Colonic mucosa (tissue), 4 donors: ENCODE measurements at regions of chr1 and their contacts with region 1.

Region 1: DNA sequence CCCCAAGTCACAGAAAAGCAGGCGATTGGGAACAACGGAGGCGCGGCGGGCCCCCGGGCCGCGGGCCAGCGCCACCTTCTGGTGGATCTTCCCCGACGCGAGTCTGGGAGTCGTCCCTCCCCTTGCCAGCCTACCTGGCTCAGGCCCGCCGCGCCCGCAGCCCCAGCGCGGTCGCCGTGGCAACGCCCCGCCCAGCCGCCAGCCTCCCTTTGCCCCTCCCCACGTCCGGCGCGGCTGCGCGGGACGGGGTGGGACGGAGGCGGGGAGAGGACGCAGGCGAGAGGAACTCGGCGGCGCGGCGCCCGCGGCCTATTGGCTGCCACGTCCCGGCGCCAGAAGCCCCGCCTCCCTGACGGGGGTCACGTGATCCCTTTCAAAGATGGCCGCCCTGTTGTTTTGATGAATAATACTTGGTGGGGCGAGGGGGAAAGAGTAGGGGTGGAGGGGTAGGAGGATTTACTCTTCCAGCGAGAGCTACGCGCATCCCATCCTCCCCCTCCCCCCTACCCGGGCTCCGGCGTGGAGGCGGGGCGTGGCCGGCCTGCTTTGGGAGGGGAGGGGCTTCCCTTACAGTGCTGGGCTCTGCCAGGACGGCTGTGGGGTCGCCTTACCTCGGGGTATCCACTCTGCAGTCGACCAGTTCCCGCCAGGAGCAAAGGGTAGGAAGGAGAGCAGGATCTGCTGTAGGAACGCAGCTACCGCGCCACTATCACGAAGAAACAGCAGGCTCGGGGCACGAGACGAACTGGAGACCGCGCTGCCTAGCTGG is at the start of gene UBE4B:
- DNase-seq: peak; percentile 97
- H3K4me3 ChIP-seq: peak within 1 kb of the TSS; percentile 78
- H3K27ac ChIP-seq: peak within 1 kb of the TSS; percentile 91
- H3K4me1 ChIP-seq: peaks cover 9% of the 10 kb centered on the region
- H3K27me3 ChIP-seq: no peaks in the 10 kb centered on the region
- CTCF ChIP-seq: peak; percentile 87
- total RNA-seq, gene UBE4B: 34.6 to 40.9 TPM

Region 2: DNA sequence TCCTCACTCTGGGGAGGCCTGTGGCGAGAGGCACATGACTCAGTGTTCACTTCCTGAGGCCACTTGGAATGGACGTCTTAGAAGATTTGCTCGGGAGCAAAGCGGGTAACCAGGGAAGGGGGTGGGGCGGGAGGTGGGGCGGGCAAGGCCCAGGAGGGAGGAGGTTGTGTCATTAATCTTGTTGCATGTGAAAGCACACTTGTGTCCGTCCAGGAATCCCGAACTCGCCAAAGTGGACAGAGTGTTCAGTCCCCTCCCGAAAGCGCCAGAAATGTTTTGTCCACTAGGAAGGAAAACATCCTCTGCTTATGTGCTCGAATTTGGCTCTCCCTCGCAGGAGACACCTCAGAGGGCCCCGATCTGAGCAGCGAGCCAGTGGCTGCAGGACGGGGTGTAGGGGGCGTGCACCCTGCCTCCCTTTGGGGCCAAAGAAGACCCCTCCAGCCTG is 655.9 kb before region 1 on chr1:
- intact Hi-C with region 1: no loop called
- DNase-seq: peak; percentile 35
- H3K4me3 ChIP-seq: no peak overlapping the region
- H3K27ac ChIP-seq: peak overlapping the region; percentile 61
- H3K4me1 ChIP-seq: peaks cover 6% of the 10 kb centered on the region
- H3K27me3 ChIP-seq: no peaks in the 10 kb centered on the region
- CTCF ChIP-seq: no peak

Region 3: DNA sequence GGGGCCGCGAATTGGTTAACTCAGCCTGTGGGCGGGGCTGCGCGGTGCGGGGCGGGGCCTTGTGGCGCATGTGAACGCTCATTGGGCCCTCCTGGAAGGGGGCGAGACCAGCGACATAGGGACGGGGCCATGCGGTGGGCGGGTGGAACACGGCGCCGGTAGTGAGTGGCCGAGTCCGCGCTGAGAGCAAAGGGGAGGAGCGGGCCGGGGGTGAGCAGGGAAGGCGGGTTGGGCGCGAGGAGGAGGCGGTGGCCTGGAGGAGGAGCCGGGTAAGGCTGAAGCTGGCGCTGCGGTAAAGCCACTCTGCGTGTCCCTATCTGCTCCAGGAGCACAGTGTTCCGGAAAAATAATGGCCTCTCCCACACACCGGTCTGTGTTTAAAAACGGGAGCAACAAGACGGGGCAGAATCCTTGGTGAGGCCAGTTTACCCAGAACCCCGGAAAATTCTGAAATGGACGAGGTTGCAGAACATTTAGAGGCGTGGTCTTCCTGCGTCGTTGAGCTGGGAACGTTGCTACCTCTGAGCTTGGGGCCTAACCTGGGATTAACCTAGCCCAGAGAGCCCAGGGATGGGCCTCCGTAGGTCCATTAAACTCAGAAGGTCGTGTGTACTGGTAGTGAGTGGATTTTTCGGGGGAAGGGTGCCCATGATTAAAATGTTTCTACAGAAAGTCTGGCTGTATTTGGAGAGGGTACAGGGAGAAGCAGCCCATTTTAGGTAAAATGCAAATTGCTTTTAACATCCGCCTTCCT is 122.2 kb before region 1 on chr1:
- intact Hi-C with region 1: no loop called
- DNase-seq: peak; percentile 100
- H3K4me3 ChIP-seq: peak overlapping the region; percentile 51
- H3K27ac ChIP-seq: peak overlapping the region; percentile 89
- H3K4me1 ChIP-seq: peaks cover 4% of the 10 kb centered on the region
- H3K27me3 ChIP-seq: no peaks in the 10 kb centered on the region
- CTCF ChIP-seq: no peak

Region 4: DNA sequence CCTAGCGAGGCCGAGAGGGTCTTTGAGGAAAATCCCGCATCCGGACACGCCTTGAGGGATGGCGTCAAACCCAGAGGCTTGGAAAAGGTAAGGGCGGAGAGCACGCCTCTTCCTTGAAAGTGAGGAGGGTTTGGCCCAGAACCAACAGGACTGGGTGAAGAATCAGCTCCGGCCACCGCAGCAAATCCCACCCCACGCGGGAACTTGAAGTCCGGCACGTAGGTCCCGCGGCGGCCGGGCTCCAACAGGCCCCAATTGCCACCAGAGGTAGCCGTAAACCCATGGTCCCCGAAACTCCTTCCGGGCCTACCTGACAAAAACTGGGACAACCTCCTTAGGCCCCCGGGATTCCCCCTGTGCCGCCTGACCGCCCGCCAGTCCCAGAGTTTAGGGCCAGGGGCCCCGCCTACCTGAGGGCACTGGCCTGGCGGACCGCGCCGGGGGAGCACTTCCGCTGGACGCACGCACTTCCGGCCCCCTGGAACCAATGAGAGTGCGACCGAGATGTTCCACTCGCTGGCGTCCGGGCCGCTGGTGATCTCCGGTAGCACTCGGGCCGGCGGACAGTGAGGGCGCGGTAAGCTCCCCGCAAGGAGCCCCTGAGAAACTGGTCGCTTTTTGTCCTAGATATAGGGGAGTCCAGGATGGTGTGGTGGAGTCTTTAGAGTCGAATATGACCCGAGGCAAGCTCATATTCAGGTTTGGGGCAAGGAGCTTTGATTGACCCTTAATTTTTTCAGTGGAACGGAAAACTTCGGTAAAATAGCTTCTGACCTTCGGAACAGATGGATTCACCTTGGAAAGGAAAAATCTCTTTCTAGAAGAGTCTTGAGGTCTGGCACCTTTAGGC is 89.6 kb before region 1 on chr1 and contains the starts of genes LZIC and NMNAT1:
- intact Hi-C with region 1: loop called (anchors 5 kb)
- DNase-seq: peak; percentile 95
- H3K4me3 ChIP-seq: peak within 1 kb of the TSS; percentile 77
- H3K27ac ChIP-seq: peak within 1 kb of the TSS; percentile 90
- H3K4me1 ChIP-seq: no peaks in the 10 kb centered on the region
- H3K27me3 ChIP-seq: no peaks in the 10 kb centered on the region
- CTCF ChIP-seq: no peak
- total RNA-seq, gene LZIC: 40.6 to 47.2 TPM
- total RNA-seq, gene NMNAT1: 18.8 to 25.4 TPM

Region 5: GRCh38 chr1:10108134-10108663 is 75.4 kb after region 1 on chr1:
- intact Hi-C with region 1: loop called (anchors 5 kb)
- DNase-seq: no peak
- H3K4me3 ChIP-seq: no peak overlapping the region
- H3K27ac ChIP-seq: no peak overlapping the region
- H3K4me1 ChIP-seq: no peaks in the 10 kb centered on the region
- H3K27me3 ChIP-seq: no peaks in the 10 kb centered on the region
- CTCF ChIP-seq: no peak